ENCODE measurements at regions of chr10 and their contacts with region 1.

Region 1: GRCh38 chr10:72692057-72692910 is at the start of gene MCU:
- DNase-seq: peak; percentile 92 to 99 (median 96)

Region 2: DNA sequence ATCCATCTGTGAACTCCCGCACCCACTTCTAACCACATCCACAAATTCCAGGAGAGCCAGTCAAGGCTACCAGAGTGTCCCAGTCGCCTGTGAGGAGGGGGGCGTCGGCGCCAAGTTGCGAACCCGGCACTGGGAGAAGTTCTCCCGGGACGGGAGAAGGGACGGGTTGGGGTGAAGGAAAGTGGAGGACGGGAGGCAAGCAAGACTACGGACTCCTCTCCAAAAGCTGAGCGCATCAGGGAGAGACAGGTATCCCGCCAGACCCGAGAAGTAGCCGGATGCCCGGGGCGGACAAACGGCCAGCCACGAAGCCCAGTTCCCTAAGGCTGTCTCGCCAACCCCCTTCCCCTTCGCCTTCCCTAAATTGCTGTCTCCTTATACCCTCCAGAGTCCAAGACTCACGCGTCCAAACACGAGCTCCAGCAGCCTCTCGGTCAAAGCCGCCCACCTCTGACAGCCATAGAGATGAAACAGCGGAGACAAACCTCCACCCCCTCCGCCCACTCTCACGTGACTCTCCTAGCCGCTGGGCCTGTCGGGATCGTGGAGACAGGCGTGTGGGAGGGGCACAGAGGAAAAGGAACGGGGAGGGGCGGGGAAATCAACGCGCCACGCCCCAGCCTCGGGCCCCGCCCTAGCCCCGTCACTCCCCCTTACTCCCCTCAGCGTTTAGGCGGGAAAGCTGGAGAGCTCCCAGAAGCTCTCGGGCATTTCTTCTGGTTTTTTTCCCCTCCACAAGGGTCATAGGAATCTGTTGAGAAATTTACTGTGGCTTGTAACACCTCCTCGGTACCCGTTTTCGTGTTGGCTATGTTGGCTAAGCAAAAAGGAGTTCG is 66.5 kb before region 1 on chr10 and contains the start of gene MICU1:
- intact Hi-C with region 1: loop called (anchors 5 kb)
- DNase-seq: peak; percentile 92 to 99 (median 96)

Region 3: GRCh38 chr10:72834183-72834825 is 142.0 kb after region 1 on chr10:
- intact Hi-C with region 1: loop called (anchors 5 kb)
- DNase-seq: peak in 6 of 10 donors; percentile 9 to 84 (median 28)

Measured in posterior cingulate gyrus (tissue), 11 donors.